Body of pancreas (tissue), 4 donors: ENCODE measurements at regions of chr4 and their contacts with region 1.

Region 1: GRCh38 chr4:83267121-83267829 is 17.3 kb downstream of the COQ2 start:
- DNase-seq: no peak
- ATAC-seq: no peak
- H3K4me3 ChIP-seq: no peak overlapping the region
- H3K27ac ChIP-seq: no peak overlapping the region
- H3K4me1 ChIP-seq: no peaks in the 10 kb centered on the region
- H3K27me3 ChIP-seq: no peaks in the 10 kb centered on the region
- CTCF ChIP-seq: no peak
- POLR2A ChIP-seq: no peak

Region 2: DNA sequence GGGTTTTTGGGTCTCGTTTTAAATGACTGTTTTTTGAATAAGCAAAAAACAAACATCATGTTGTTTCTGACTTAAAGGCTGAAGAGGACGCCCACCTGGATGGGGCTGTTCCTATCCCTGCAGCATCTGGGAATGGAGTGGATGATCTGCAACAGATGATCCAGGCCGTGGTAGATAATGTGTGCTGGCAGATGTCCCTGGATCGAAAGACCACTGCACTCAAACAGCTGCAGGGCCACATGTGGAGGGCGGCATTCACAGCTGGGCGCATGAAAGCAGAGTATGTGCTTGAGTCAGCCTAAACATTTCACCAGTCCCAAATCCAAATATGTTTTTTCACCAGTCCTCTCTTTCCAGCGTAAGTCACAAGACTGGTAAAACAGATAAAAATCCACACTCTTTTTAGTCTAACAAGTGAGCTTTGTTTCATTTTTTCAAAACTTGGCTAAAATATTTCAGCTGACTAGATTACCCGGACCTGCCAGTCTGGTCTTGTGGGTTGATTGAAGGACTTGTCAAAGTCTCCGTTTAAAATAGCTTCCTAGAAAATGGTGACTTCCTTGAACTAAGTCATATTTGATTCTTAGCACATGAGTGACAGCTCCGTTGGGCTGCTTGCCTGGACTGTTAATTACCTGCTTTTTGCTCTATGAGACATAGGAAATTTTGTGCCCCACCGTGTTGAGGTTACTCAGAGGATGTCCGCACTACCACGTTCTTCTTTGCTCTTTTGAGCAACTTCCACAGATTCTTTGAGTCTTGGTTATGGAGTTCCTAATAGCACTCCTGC is 816.1 kb before region 1 on chr4:
- intact Hi-C with region 1: loop called (anchors 10 kb)
- DNase-seq: no peak
- ATAC-seq: no peak
- H3K4me3 ChIP-seq: no peak overlapping the region
- H3K27ac ChIP-seq: no peak overlapping the region
- H3K4me1 ChIP-seq: no peaks in the 10 kb centered on the region
- H3K27me3 ChIP-seq: no peaks in the 10 kb centered on the region
- CTCF ChIP-seq: no peak
- POLR2A ChIP-seq: no peak